ENCODE measurements at regions of chr5 and their contacts with region 1.

Region 1: DNA sequence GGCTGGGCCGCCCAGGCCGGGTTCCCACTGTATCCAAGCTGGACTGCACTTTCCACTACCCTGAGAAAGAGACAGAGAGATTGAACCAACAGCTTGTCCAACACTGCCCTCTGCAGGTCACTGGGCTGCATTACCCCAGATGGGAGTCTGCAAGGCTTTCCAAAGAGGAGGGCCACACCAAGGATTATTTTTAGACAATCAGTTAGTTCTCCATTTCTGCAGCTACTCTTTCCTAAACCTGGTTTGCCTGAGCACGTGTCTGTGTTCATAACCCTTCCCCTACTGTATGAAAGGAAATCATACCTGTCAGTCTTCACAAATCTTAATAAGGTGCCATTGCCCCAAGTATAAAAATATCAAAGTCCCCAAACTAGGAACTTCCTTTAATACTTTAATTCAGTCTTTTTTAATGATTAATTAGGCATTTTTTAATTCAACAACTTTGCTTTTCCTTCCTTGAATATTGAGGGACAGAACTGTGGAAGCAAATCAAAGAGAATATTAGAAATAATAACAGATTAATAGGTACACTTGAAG is 13.4 kb upstream of the FGF1 start:
- DNase-seq: peak; percentile 84 to 98
- H3K4me3 ChIP-seq: no peak overlapping the region
- CTCF ChIP-seq: peak in 1 of 3 donors; percentile 82
- POLR2A ChIP-seq: no peak

Region 2: DNA sequence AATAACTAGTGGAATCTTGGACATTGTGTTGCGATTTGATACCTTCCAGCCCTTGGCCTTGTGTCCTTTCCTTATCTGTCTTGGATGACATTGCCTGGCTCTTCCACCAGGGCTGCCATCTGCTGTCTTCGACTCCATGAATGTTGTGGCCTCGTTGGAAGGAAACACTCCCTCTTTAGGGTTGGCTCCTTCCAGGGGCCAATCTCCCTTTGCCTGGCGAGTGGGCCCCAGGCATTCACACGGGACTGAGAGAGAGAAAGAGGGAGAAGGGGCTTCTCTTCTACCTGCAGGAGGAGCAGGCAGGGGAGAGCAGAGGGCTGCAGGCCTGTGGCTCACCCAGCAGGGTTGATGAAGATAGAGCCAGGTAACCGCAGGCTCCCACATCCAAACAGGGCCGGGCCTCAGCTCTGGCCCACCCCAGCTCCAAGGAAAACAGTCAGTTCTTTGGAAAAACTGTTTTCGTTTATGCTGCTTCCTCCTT is 44.6 kb before region 1 on chr5:
- intact Hi-C with region 1: loop called (anchors 5 kb)
- DNase-seq: no peak
- H3K4me3 ChIP-seq: no peak overlapping the region
- CTCF ChIP-seq: no peak
- POLR2A ChIP-seq: no peak